ENCODE measurements at regions of chr7 and their contacts with region 1.

Region 1: DNA sequence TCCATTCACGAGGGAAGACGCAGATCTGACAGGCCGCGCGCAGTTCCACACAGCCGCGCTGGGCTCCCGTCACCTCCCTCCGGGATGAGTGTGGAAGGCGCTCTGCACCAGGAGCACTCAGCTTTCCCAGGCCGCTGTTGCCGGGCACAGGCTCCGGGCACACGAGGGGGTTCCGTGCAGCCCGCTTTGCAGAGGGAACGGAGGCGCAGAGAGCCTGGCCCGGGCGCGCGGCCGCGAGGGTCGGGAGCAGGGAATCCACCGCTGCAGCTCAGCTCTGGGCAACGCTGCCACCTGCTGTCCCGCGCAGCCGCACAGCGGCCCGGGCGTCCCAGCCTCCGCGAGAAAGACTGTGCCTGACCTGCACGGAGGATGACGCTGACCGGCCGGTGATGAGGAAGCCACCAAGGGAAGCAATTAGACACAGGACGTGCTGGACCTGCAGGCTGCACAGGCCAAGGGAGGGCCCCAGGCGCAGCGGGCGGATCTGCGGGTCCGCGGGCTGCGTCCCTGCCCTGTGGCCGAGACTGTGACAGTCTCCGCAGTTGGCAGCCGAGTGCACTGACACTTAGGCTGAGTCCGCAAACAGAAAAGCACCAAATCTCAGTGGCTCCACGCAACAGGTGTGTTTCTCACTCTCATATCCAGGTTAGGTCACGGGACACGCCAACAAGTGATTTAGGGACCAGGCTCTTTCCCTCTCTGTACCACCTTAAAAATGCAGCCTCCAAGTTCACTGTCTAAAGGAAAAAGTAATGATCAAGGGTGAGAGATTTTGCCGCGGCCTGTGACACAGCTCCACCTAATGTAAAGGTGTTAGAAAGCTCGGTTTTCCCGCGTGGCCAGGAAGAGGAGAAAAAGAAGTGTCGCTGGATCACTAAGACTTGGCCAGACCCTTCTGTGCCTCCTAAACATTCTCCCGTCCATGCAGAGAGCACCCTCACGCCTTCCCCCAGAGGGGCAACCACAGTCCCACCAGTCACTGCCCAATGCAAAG is 94.5 kb downstream of the SEC61G start:
- DNase-seq: peak; percentile 6
- H3K4me3 ChIP-seq: peak overlapping the region; percentile 18 to 23
- H3K27ac ChIP-seq: no peak overlapping the region
- H3K4me1 ChIP-seq: no peaks in the 10 kb centered on the region
- H3K27me3 ChIP-seq: no peaks in the 10 kb centered on the region
- CTCF ChIP-seq: peak in 2 of 4 experiments; percentile 30 to 38
- POLR2A ChIP-seq: no peak

Region 2: GRCh38 chr7:54477083-54477482 is 187.4 kb before region 1 on chr7:
- intact Hi-C with region 1: no loop called
- DNase-seq: no peak
- H3K4me3 ChIP-seq: no peak overlapping the region
- H3K27ac ChIP-seq: no peak overlapping the region
- H3K4me1 ChIP-seq: no peaks in the 10 kb centered on the region
- H3K27me3 ChIP-seq: no peaks in the 10 kb centered on the region
- CTCF ChIP-seq: peak in 1 of 4 experiments; percentile 12
- POLR2A ChIP-seq: no peak

Region 3: DNA sequence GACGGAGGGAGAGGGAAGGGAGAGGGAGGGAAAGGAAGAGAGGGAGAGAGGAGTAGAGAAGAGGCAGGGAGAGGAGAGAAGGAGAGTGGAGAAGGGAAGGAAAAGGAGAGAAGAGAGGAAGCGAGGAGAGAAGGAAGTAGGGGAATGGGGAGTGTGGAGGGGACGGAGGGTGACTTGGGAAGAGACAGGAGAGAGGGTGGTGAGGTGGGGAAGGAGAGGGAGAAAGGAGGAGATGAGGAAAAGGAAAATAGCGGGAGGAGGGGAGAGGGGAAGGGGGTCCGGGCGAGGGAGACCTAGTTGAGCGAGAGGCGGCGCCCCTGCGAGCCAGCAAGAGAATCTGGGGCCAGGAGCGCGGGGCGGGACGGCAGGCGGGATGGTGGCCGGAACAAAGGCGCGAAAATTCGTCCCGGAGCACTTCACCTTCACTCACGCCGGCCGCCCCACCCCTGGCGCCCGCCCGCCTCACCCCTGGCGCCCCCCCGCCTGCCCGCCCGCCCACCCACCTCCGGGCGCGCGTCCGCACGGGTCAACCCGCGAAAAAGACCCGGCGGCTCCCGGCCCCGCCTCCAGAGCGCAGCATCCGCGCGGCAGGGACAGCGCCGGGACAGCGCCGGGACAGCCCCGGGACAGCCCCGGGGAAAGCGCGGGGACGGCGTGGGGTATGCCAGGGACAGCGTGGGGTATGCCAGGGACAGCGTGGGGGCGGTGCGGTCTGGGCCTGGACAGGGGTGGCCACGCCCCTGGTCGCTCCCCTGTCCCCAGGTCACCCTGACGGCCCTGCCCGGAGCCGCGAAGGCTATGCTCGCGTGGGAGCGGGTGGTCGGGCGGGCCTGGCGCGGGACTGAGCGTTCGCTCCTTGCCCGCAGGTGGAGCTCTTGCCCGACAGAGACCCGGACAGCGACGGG is 118.2 kb before region 1 on chr7:
- intact Hi-C with region 1: loop called (anchors 2 kb)
- DNase-seq: no peak
- H3K4me3 ChIP-seq: peak overlapping the region in 1 of 2 donors; percentile 2
- H3K27ac ChIP-seq: no peak overlapping the region
- H3K4me1 ChIP-seq: no peaks in the 10 kb centered on the region
- H3K27me3 ChIP-seq: peaks cover 26% of the 10 kb centered on the region
- CTCF ChIP-seq: no peak
- POLR2A ChIP-seq: no peak